ENCODE measurements at regions of chr12 and their contacts with region 1.

Region 1: DNA sequence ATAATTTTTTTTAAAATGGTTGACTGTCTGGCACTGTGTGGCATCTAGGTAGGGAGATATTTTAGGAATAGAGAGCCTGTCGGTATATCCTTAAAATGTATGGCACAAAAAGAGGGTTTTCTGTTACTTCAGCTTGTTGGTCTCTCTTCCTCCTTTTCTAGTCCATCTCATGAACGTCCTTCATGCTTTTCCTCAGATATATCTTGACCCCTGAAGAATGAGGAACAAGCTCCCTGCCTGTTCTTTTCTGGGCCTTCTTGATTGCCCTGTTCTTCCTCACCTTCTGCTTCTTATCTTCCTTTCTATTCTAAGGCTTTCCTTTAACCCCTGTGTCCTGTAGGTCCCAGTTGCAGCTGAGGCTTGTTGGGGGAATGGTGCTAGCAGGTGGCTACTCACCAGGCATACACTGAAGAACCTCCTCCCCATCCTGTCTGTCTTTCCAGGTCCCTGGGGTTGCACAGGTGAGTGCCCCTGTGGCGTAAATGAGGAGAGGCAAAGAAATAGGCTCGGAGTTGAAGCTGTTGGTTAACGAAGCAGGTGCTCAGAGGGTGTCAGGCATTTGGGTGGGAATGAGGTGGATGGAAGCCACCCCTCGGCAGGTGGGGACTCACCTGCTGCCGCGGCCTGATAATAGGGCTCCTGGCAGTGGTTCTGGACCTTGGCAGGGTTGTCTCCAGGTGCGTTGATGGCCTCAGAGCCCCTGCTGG is 7.2 kb upstream of the C1R start:
- DNase-seq: no peak
- ATAC-seq: no peak
- H3K4me3 ChIP-seq: no peak overlapping the region
- H3K27ac ChIP-seq: no peak overlapping the region
- H3K4me1 ChIP-seq: peaks cover 0 to 11% (median 0%) of the 10 kb centered on the region in 12 donors
- H3K27me3 ChIP-seq: no peaks in the 10 kb centered on the region
- CTCF ChIP-seq: no peak
- POLR2A ChIP-seq: no peak

Region 2: DNA sequence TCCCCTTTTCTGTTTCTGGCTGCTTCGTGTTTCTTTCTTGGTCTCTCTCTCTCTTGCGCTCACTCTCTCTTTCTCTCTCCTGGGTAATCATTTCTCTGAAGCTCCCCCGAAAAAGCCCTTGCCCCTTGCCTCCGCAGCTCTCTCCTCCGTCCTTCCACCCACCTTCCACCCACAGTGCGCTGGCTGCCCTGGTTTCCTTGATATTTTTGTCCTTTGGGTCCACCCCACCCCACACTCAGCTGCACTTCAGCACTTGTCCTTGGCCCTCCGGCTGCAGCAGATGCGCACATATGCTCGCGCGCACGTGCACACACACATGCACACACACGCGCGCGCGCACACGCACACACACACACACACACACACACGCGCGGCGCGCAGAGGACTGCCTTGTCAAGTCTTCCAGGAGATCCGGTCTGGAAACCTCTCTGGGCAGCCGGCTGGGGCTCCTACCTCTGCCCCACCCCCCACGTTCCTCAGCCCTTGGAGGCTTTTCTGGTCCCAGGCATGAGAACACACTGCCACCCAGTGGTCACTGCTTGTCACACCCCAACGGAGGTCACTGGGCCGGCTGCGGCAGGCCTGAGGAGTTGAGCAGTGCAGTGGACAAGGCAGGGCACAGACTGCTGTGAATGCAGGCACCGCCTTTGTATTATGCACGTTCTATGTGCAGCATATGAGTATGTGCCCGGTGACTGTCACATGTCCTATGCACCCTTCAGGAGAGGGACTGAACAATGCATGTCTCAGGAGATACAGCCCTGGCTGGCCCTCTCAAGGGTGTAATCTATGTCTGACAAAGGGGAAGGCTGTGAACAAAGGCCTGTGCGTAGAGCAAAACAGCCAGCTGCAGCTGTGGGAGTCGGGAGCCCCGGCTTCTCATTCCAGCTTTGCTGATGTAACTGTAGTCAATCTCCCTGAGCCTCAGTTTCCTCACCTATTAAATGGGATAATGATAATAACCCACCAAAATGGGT is 320.6 kb before region 1 on chr12:
- intact Hi-C with region 1: no loop called
- DNase-seq: peak; percentile 94 to 96 (median 96)
- ATAC-seq: peak; percentile 93 to 97 (median 97)
- H3K4me3 ChIP-seq: peak overlapping the region in 11 of 12 donors; percentile 23 to 62 (median 47)
- H3K27ac ChIP-seq: peak overlapping the region in 10 of 12 donors; percentile 56 to 82 (median 66)
- H3K4me1 ChIP-seq: peaks cover 0 to 21% (median 14%) of the 10 kb centered on the region in 12 donors
- H3K27me3 ChIP-seq: peaks cover 0 to 21% (median 0%) of the 10 kb centered on the region in 9 donors
- CTCF ChIP-seq: peak; percentile 93 to 99 (median 96)
- POLR2A ChIP-seq: peak in 1 of 2 donors; percentile 27

Region 3: GRCh38 chr12:6978609-6979011 is 120.8 kb before region 1 on chr12:
- intact Hi-C with region 1: no loop called
- DNase-seq: peak in 1 of 5 donors; percentile 19
- ATAC-seq: peak; percentile 29 to 64 (median 40)
- H3K4me3 ChIP-seq: no peak overlapping the region
- H3K27ac ChIP-seq: peak overlapping the region in 11 of 12 donors; percentile 37 to 83 (median 55)
- H3K4me1 ChIP-seq: peaks cover 0 to 17% (median 0%) of the 10 kb centered on the region in 12 donors
- H3K27me3 ChIP-seq: no peaks in the 10 kb centered on the region
- CTCF ChIP-seq: no peak
- POLR2A ChIP-seq: no peak

Region 4: GRCh38 chr12:7060353-7060954 is 39.0 kb before region 1 on chr12 and contains the start of gene C1S:
- intact Hi-C with region 1: loop called in 1 of 10 experiments (anchors 5 kb)
- DNase-seq: peak; percentile 69 to 74 (median 71)
- ATAC-seq: peak; percentile 92 to 98 (median 98)
- H3K4me3 ChIP-seq: peak within 1 kb of the TSS in 10 of 12 donors; percentile 37 to 59 (median 42)
- H3K27ac ChIP-seq: peak within 1 kb of the TSS; percentile 54 to 82 (median 72)
- H3K4me1 ChIP-seq: peaks cover 0 to 34% (median 6%) of the 10 kb centered on the region in 12 donors
- H3K27me3 ChIP-seq: peaks cover 0 to 6% (median 0%) of the 10 kb centered on the region in 9 donors
- CTCF ChIP-seq: peak; percentile 51 to 90 (median 78)
- POLR2A ChIP-seq: peak in 1 of 2 donors; percentile 39
- total RNA-seq, gene C1S: 31.9 to 247 (median 74.2) TPM

Region 5: GRCh38 chr12:7571257-7571656 is 471.8 kb after region 1 on chr12:
- intact Hi-C with region 1: no loop called
- DNase-seq: peak in 2 of 5 donors; percentile 13 to 44
- ATAC-seq: peak; percentile 61 to 86 (median 79)
- H3K4me3 ChIP-seq: no peak overlapping the region
- H3K27ac ChIP-seq: peak overlapping the region in 1 of 12 donors; percentile 83
- H3K4me1 ChIP-seq: peaks cover 0 to 10% (median 0%) of the 10 kb centered on the region in 12 donors
- H3K27me3 ChIP-seq: no peaks in the 10 kb centered on the region
- CTCF ChIP-seq: no peak
- POLR2A ChIP-seq: no peak

Region 6: GRCh38 chr12:7678738-7679137 is 579.3 kb after region 1 on chr12:
- intact Hi-C with region 1: no loop called
- DNase-seq: no peak
- ATAC-seq: no peak
- H3K4me3 ChIP-seq: no peak overlapping the region
- H3K27ac ChIP-seq: no peak overlapping the region
- H3K4me1 ChIP-seq: peaks cover 0 to 3% (median 0%) of the 10 kb centered on the region in 12 donors
- H3K27me3 ChIP-seq: peaks cover 0 to 7% (median 0%) of the 10 kb centered on the region in 9 donors
- CTCF ChIP-seq: no peak
- POLR2A ChIP-seq: no peak

Measured in heart left ventricle (tissue), 16 donors.